ENCODE measurements at regions of chr2 and their contacts with region 1.

Region 1: GRCh38 chr2:164164602-164165001 is 428.8 kb upstream of the FIGN start:
- DNase-seq: no peak
- H3K4me3 ChIP-seq: no peak overlapping the region
- H3K27ac ChIP-seq: no peak overlapping the region
- H3K4me1 ChIP-seq: no peaks in the 10 kb centered on the region
- CTCF ChIP-seq: no peak

Region 2: GRCh38 chr2:163990541-163990940 is 174.1 kb before region 1 on chr2:
- CTCF ChIA-PET with region 1: no interaction called
- POLR2A ChIA-PET with region 1: no interaction called
- intact Hi-C with region 1: loop called (anchors 5 kb)
- DNase-seq: no peak
- H3K4me3 ChIP-seq: no peak overlapping the region
- H3K27ac ChIP-seq: no peak overlapping the region
- H3K4me1 ChIP-seq: no peaks in the 10 kb centered on the region
- CTCF ChIP-seq: no peak

Measured in OCI-LY7 (cell line).